Gastrocnemius medialis (tissue), 4 donors: ENCODE measurements at regions of chr3 and their contacts with region 1.

Region 1: GRCh38 chr3:140559546-140559945 is 118.3 kb upstream of the TRIM42 start:
- DNase-seq: no peak
- ATAC-seq: no peak
- H3K4me3 ChIP-seq: no peak overlapping the region
- H3K27ac ChIP-seq: no peak overlapping the region
- H3K4me1 ChIP-seq: no peaks in the 10 kb centered on the region
- H3K27me3 ChIP-seq: no peaks in the 10 kb centered on the region
- CTCF ChIP-seq: no peak
- POLR2A ChIP-seq: no peak

Region 2: DNA sequence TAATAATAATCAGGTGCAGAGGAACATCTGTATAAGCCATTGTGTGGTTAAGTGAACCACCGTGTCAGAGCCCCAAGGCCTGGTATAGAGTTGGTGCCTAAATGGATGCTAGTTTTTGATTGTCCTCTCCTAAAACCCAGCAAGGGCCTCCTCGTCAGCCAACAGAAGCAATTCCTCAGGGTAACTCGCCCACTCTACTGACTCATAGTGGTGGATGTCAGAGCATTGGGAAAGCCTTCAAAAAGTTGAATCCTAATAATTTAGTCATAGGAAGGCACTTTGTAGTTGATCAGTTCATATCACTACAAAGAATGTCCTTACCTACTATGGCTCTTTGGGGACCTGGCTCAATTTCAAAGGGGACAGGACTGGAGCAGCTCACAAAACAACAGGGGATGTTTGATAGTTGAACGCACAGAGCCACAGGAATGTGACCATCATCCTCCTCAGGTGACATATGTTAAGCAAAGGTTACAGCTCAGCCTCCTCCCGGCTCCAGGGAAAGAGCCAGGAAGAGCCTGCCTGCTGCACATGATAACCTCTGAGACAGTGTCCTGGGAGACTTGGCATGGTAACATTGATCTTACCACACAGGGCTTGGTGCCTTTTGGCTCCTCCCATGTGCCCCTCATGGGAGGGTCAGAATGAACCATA is 285.9 kb before region 1 on chr3:
- in situ Hi-C with region 1: no loop called
- intact Hi-C with region 1: no loop called
- DNase-seq: no peak
- ATAC-seq: no peak
- H3K4me3 ChIP-seq: no peak overlapping the region
- H3K27ac ChIP-seq: no peak overlapping the region
- H3K4me1 ChIP-seq: no peaks in the 10 kb centered on the region
- H3K27me3 ChIP-seq: no peaks in the 10 kb centered on the region
- CTCF ChIP-seq: no peak
- POLR2A ChIP-seq: no peak

Region 3: DNA sequence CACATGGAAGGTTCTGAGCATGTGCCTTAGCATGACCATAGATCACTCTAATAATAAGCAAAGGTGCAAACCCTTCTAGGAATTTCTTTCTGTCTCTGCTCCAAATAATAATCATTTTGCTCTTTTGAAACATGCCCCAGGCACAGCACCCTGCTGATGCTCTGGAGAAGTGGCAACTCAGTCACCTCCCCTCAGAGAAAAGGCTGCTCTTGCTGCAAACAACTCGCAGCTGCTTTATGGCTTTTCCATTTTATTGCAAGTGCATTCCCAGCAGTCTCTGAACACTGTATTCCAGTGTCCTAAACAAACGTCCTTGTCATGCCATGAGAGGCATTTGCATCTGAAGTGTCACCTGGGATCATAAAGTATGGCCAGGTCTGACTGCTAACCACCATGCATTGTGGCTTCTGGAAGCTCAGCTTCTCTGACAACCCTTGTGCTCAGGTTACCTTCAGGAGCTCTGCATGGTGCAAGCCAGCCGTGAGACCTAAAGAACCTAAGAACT is 239.8 kb before region 1 on chr3:
- in situ Hi-C with region 1: no loop called
- intact Hi-C with region 1: no loop called
- DNase-seq: no peak
- ATAC-seq: no peak
- H3K4me3 ChIP-seq: no peak overlapping the region
- H3K27ac ChIP-seq: no peak overlapping the region
- H3K4me1 ChIP-seq: no peaks in the 10 kb centered on the region
- H3K27me3 ChIP-seq: no peaks in the 10 kb centered on the region
- CTCF ChIP-seq: no peak
- POLR2A ChIP-seq: no peak

Region 4: DNA sequence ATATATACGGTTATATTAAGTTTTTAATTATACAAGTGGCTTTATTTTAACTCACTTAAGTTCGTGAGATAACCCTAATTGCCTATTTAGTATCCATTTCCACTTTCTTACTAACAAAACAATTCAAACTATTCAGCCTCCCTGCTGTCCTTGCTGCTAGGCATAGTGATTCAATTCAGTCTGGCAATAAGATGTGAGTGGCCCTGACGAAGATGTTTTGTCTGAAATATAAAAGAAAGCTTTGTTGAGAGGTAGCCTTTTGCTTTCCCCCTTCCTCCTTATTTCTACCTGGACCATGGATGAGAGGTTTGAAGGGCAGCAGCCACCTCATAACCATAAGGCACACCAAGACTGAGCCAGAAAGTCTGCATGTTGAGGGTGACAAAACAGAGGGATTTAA is 29.0 kb after region 1 on chr3:
- in situ Hi-C with region 1: no loop called
- intact Hi-C with region 1: loop called (anchors 1 kb)
- DNase-seq: no peak
- ATAC-seq: no peak
- H3K4me3 ChIP-seq: no peak overlapping the region
- H3K27ac ChIP-seq: no peak overlapping the region
- H3K4me1 ChIP-seq: no peaks in the 10 kb centered on the region
- H3K27me3 ChIP-seq: no peaks in the 10 kb centered on the region
- CTCF ChIP-seq: no peak
- POLR2A ChIP-seq: no peak